ENCODE measurements at regions of chr1 and their contacts with region 1.

Region 1: DNA sequence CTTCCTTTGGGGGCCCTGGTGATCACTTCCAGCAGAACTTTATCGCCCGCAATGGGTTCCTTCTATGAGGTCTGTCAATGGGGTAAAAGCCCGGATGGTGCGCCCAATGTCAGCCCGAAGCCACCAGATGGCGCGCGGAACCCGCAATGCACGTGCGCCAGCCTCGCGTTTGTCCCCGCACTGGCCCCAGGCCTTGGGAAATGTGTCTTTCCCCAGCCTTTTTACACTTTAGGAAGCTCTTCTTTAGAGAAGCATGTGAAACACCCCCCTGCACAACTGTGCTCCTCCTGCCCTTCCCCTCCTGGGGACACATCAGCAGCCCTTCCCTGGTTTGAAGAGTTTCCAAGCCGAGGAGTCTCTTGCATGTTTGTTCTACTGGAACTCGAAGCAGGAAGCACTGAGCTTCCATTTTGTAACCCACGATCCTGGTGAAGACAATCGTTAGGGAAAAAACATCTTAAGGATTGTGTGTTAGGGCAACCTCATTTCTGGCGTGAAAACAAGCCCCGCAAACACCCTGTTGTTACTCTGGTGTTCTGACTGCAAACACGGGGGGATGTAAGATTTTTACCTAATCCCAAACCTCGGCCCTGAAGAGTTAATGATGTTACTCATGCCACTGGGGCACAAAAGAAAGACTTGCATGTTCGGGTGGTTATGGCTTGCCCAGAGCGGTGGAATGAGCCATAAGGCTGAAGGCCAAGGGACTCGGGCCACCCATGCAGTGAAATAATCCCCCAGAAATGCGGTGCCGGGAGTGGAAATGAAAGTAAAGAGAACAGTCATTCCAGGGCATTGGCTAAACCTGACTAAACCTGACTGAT is 20.4 kb upstream of the TARBP1 start:
- DNase-seq: no peak
- ATAC-seq: peak; percentile 77
- H3K4me3 ChIP-seq: peak overlapping the region; percentile 14
- H3K27ac ChIP-seq: peak overlapping the region; percentile 69
- H3K4me1 ChIP-seq: peaks cover 45% of the 10 kb centered on the region
- H3K27me3 ChIP-seq: no peaks in the 10 kb centered on the region
- CTCF ChIP-seq: peak; percentile 94 to 96 (median 95); a peak in 5 of 6 replicates
- EP300 ChIP-seq: no peak
- POLR2A ChIP-seq: no peak
- RAD21 ChIP-seq: peak; percentile 96

Region 2: GRCh38 chr1:234463749-234464148 is 35.6 kb before region 1 on chr1:
- CTCF ChIA-PET with region 1: no interaction called
- POLR2A ChIA-PET with region 1: no interaction called
- RAD21 ChIA-PET with region 1: no interaction called
- SMC1A ChIA-PET with region 1: no interaction called
- in situ Hi-C with region 1: no loop called
- intact Hi-C with region 1: no loop called
- DNase-seq: no peak
- ATAC-seq: no peak
- H3K4me3 ChIP-seq: no peak overlapping the region
- H3K27ac ChIP-seq: no peak overlapping the region
- H3K4me1 ChIP-seq: no peaks in the 10 kb centered on the region
- H3K27me3 ChIP-seq: no peaks in the 10 kb centered on the region
- CTCF ChIP-seq: no peak
- EP300 ChIP-seq: no peak
- POLR2A ChIP-seq: no peak
- RAD21 ChIP-seq: no peak

Region 3: GRCh38 chr1:234509452-234510328 is 10.4 kb after region 1 on chr1:
- CTCF ChIA-PET with region 1: interaction called, 7 read pairs
- POLR2A ChIA-PET with region 1: interaction called, 3 read pairs
- RAD21 ChIA-PET with region 1: interaction called, 6 read pairs
- SMC1A ChIA-PET with region 1: interaction called, 11 read pairs
- in situ Hi-C with region 1: no loop called
- intact Hi-C with region 1: no loop called
- DNase-seq: no peak
- ATAC-seq: peak; percentile 37
- H3K4me3 ChIP-seq: no peak overlapping the region
- H3K27ac ChIP-seq: no peak overlapping the region
- H3K4me1 ChIP-seq: no peaks in the 10 kb centered on the region
- H3K27me3 ChIP-seq: no peaks in the 10 kb centered on the region
- CTCF ChIP-seq: no peak
- EP300 ChIP-seq: no peak
- POLR2A ChIP-seq: no peak
- RAD21 ChIP-seq: no peak

Region 4: DNA sequence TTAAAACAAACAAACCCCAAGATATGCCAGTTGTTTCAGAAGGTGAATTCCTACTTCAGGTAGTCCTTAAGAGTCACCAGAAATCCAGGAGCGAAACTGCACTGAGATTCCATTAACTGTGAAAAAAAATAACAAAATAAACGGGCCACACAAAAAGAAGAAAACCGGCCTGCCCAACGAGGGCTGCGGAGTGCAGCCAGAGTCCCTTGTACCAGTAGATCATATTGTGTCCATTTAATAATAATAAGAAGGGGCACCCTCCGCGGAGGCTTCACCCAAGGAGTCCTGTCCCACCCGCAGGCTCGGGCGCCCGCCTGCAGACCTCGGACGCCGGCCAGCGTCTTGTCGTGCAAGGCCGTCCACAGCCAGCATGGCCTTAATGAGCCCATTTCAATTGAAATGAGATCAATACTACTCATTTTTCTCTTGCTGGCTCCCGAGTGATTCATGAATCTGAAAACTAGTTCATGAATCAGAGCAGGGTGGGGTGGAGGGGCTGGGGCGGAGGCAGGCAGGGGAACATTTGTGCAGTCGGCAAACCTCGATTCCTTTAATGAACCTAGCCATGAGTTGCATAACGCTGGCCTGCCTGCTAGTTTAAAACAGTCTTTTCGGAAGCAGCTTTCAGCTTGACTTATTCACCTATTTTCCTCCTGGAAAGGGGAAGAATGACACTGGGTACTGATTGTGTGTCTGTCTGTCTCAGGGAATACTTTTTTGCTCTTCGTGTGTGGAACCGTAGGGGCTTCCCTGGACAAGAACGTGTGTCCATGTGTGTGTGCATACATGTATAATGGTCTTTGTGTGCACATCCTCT is 223.8 kb after region 1 on chr1:
- CTCF ChIA-PET with region 1: interaction called, 8 read pairs
- POLR2A ChIA-PET with region 1: no interaction called
- RAD21 ChIA-PET with region 1: interaction called, 8 read pairs
- SMC1A ChIA-PET with region 1: interaction called, 6 read pairs
- in situ Hi-C with region 1: no loop called
- intact Hi-C with region 1: loop called (anchors 5 kb)
- DNase-seq: no peak
- ATAC-seq: no peak
- H3K4me3 ChIP-seq: no peak overlapping the region
- H3K27ac ChIP-seq: peak overlapping the region; percentile 94
- H3K4me1 ChIP-seq: peaks cover 49% of the 10 kb centered on the region
- H3K27me3 ChIP-seq: no peaks in the 10 kb centered on the region
- CTCF ChIP-seq: no peak
- EP300 ChIP-seq: no peak
- POLR2A ChIP-seq: no peak
- RAD21 ChIP-seq: no peak

Region 5: DNA sequence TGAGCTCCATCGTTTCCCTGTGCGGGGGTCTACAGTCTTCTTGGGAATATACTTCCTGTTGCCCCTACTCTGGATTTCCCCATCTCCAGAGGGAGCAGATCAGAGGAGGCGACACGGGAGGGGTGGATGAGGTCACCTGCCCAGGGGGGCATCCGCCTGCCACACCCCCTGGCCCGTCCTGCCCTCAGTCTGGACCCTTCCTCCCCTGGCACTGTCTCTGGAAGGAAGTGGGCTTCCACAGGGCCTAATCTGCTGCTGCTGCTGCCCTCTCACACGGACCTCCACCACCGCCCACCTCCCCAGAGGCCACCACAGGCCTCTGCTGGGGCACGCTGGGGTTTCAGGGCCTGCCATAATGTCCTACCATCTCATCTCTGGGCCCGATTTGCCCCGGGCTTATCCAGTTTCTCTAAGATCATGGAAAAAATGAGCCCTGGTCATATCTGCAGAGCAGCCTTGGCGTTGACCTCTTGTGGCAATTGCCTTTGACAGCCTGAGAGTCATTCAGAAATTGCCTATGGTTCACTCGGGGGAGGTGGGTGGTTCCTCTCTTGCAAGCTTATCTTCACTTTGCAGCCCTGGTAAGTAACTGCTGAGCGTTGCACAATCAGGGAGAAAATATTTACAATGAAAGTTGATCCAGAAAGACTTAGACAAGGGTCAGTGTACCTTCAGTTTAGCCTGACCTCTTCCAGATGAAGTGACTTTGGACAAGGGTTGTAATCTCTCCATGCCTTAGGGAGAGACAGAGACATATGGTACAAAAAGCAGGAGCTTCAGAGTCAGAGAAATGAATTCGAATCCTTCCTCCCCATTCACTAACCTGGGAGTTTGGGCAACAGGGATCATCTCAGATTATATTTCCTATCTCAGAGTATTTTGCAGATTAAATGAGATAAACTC is 376.9 kb after region 1 on chr1:
- CTCF ChIA-PET with region 1: no interaction called
- POLR2A ChIA-PET with region 1: no interaction called
- RAD21 ChIA-PET with region 1: interaction called, 9 read pairs
- SMC1A ChIA-PET with region 1: interaction called, 3 read pairs
- in situ Hi-C with region 1: no loop called
- intact Hi-C with region 1: loop called (anchors 2 kb)
- DNase-seq: no peak
- ATAC-seq: peak; percentile 50
- H3K4me3 ChIP-seq: no peak overlapping the region
- H3K27ac ChIP-seq: no peak overlapping the region
- H3K4me1 ChIP-seq: peaks cover 40% of the 10 kb centered on the region
- H3K27me3 ChIP-seq: no peaks in the 10 kb centered on the region
- CTCF ChIP-seq: no peak
- EP300 ChIP-seq: no peak
- POLR2A ChIP-seq: no peak
- RAD21 ChIP-seq: no peak

Region 6: DNA sequence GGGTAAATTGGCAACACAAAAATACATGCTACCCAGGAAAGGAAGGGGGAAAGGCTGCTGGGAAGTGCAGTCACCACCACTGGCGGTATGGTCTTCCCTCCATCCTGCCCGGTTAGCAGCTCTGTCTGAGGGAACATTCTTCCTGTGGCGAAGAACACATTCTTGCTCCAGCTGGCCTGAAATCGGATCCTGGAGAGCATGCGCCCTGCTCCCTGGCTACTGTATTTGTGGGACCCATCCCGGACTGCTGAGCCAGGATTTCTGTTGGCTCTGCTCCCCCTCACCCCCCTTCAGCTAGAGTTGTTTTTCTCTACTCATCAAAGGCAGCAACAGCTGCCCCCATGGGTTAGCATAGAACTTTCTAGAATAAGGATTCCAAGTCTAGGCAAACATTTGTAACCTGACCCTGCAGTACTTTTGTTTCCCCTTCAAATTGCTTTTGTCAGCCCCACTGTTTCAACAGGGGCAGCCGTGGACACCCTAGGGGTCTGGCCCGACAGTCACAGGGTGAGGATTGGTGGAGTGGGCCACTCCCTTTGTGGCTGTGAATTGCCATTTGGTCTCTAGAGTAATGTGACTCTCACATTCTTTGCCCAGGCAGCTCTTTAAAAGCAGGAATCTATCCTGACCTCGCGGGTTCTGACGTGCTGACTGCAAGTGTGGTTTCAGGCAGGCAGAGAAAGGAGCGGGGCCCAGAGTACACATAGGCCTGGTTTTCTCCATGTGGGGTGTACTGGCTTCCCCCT is 471.6 kb after region 1 on chr1:
- CTCF ChIA-PET with region 1: interaction called, 8 read pairs
- POLR2A ChIA-PET with region 1: interaction called, 3 read pairs
- RAD21 ChIA-PET with region 1: interaction called, 14 read pairs
- SMC1A ChIA-PET with region 1: interaction called, 9 read pairs
- in situ Hi-C with region 1: loop called (anchors 5 kb)
- intact Hi-C with region 1: loop called (anchors 1 kb)
- DNase-seq: no peak
- ATAC-seq: peak; percentile 72
- H3K4me3 ChIP-seq: no peak overlapping the region
- H3K27ac ChIP-seq: peak overlapping the region; percentile 95
- H3K4me1 ChIP-seq: peaks cover 60% of the 10 kb centered on the region
- H3K27me3 ChIP-seq: no peaks in the 10 kb centered on the region
- CTCF ChIP-seq: no peak
- EP300 ChIP-seq: peak in 1 of 2 experiments; percentile 87; a peak in 2 of 4 replicates
- POLR2A ChIP-seq: peak; percentile 31; the same call in 1 of the 2 replicates
- RAD21 ChIP-seq: 0 out of 2 replicates have a peak, but pooled peaks have one; percentile 4

Region 7: GRCh38 chr1:235075188-235075926 is 576.0 kb after region 1 on chr1:
- CTCF ChIA-PET with region 1: interaction called, 7 read pairs
- POLR2A ChIA-PET with region 1: interaction called, 3 read pairs
- RAD21 ChIA-PET with region 1: interaction called, 10 read pairs
- SMC1A ChIA-PET with region 1: interaction called, 20 read pairs
- in situ Hi-C with region 1: loop called (anchors 5 kb)
- intact Hi-C with region 1: no loop called
- DNase-seq: peak; percentile 98
- ATAC-seq: peak; percentile 77
- H3K4me3 ChIP-seq: peak overlapping the region; percentile 37
- H3K27ac ChIP-seq: peak overlapping the region; percentile 99
- H3K4me1 ChIP-seq: peaks cover 70% of the 10 kb centered on the region
- H3K27me3 ChIP-seq: no peaks in the 10 kb centered on the region
- CTCF ChIP-seq: no peak
- EP300 ChIP-seq: peak; percentile 99 to 100; a peak in 3 of 4 replicates
- POLR2A ChIP-seq: peak; percentile 74
- RAD21 ChIP-seq: no peak